ENCODE measurements at regions of chr18 and their contacts with region 1.

Region 1: DNA sequence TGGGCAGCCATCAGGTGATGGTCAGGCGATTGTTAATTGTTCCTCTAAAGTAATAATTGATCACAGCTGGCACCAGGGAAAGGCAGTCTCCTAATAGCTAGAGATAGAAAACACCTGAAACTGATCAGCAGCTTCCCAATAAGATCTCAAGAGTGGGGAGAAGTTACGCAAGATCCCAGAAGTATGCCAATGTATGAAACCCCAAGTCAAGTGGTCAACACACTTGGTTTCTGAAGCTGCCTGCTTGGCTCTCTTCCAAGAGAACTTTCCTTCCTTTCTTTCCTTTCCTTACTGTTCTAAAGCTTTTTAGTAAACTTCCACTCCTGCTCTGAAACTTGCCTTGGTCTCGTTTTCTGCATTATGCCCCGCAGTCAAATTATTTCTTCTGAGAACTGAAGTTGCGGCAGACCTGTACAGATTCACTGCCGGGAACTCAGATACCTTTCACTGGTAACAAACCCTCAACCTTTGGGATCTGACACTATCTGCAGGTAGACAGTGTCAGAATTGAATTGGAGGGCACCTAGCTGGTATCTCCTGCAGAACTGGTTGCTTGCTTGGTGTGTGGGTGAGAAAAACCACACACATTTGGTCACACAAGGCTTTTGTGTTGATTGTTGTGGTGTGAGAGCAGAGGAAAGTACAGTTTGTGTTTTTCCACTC is 201.7 kb upstream of the SKOR2 start:
- ATAC-seq: no peak
- H3K4me3 ChIP-seq: no peak overlapping the region
- H3K27ac ChIP-seq: no peak overlapping the region
- H3K4me1 ChIP-seq: no peaks in the 10 kb centered on the region

Region 2: GRCh38 chr18:47370052-47370451 is 83.1 kb before region 1 on chr18:
- in situ Hi-C with region 1: loop called in 1 of 9 experiments (anchors 25 kb)
- ATAC-seq: no peak
- H3K4me3 ChIP-seq: no peak overlapping the region
- H3K27ac ChIP-seq: no peak overlapping the region
- H3K4me1 ChIP-seq: no peaks in the 10 kb centered on the region

Measured in motor neuron (in vitro differentiated cells).